GM18951 (cell line): ENCODE measurements at regions of chr1 and their contacts with region 1.

Region 1: DNA sequence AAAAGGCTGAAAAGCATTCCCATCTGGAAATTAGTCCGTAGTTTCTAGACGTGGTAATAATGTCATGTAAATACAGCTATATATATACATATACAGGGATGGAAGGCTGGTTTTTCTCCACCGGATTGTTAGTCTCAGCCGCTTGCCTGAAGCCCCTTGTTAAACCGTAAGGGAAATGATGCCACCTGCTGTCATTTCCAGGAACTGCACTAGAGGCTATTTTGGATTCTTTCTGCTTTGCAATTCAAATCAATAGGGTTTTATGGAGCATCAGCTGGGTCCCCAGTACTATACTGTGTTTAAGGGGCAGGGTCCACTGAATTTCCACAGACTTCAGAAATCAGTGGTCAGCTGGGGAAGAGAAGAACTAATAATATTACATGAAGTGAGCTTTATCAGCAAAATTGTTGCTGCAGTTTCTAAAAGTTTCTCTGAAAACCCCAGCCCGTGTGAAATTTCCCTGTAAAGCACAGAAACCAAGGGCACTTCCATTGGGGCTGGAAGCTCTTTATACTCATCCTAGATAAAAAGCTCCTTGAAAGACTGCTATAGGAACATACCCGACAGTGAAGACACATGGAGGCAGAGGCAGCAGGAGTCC is 33.8 kb upstream of the MPZL1 start:
- POLR2A ChIP-seq: no peak

Region 2: GRCh38 chr1:167090314-167090942 is 597.6 kb before region 1 on chr1 and contains the start of gene GPA33:
- in situ Hi-C with region 1: loop called (anchors 25 kb)
- POLR2A ChIP-seq: no peak

Region 3: DNA sequence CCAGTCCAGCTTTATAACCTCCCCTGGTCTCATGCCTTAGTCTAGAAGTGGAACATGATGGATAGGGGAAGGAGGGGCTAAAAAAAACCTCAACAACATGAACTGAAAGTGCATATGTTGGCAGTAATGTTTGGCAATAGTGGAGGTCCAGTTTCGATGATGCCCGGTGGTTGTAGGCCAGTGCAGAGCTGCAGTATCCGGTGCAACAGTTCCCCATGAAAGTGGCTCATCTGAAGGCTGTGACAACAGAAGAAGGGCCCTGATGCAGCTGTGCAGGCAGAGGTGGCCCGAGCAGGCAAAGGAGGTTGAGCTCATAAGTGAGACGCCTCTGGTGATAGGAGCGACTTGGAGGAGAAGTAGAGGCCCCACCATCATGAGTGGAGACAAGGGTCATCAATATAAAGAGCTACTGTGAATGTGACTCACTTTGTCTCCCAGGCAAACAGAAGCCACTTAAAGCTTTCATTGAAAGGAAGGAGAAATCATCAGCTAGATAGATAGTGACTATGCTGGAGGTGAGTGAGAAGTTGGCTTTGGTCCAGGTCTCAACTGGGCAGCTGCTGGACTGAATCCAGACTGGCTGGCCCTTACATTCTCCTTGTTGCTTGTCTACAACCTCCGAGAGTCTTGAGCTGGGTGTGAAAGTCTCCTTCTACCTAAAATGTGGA is 124.3 kb before region 1 on chr1:
- in situ Hi-C with region 1: no loop called
- POLR2A ChIP-seq: no peak

Region 4: DNA sequence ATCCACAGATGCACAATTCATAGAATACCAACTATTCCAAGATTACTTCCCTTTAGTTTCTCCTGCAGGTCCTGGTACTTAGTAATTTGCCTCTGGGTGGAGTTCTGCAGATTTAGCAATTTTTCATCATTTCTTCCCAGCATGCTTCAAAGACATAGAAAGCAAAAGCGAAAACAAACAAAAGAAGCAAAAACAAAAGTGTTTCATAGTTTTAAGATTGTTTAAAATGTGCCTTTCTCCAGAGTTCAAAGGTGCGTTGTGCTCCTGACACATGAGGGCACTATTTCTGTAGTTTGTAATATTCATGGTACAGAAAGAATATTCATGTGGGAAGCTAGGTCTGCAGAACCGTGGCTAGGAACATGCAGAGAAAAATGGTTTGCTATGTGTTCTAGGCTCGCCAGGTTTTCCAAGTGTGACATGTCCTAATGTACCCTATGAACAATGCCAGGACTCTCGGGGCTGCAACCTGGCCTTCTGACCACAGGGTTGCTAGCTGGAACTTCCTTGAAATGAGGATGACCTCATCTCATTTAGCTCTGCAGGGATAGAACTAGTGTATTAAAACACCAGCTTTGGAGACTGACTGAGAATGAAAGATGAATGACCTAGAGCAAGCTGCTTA is 88.0 kb before region 1 on chr1:
- in situ Hi-C with region 1: loop called (anchors 5 kb)
- POLR2A ChIP-seq: no peak

Region 5: DNA sequence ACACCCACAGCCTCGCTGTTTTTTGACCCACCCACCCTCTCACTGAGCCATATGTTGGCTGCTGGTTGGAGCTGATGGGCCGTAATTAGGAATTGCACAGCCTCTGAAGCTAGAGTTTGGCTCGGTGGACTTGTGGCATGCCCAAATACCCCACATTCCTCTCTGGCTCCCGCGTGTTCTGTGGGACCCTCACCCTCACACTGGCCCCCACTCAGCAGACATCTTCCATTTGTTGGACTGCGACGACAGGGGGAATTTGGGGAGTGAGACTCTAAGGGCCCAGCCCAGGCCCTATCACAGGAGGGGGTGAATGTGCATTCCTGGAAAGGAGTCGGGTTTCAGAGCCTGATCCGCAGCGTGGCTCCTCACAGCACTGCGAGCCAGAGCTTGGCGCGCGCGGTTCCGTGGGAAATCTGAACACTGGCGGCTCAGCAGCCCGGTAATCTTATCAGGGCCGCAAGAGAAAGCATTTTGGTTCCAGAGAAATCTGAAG is 52.8 kb before region 1 on chr1:
- in situ Hi-C with region 1: no loop called
- POLR2A ChIP-seq: no peak